ENCODE measurements at regions of chr7 and their contacts with region 1.

Region 1: GRCh38 chr7:156816943-156817572 is 75.9 kb downstream of the LMBR1 start:
- DNase-seq: no peak
- ATAC-seq: peak; percentile 66
- H3K4me3 ChIP-seq: no peak overlapping the region
- H3K27ac ChIP-seq: no peak overlapping the region
- H3K4me1 ChIP-seq: no peaks in the 10 kb centered on the region
- H3K27me3 ChIP-seq: no peaks in the 10 kb centered on the region
- CTCF ChIP-seq: peak; percentile 21 to 62 (median 39); a peak in 3 of 6 replicates
- EP300 ChIP-seq: no peak
- POLR2A ChIP-seq: no peak
- RAD21 ChIP-seq: peak; percentile 94

Region 2: GRCh38 chr7:155796381-155797261 is 1020.4 kb before region 1 on chr7:
- CTCF ChIA-PET with region 1: interaction called, 3 read pairs
- POLR2A ChIA-PET with region 1: no interaction called
- RAD21 ChIA-PET with region 1: no interaction called
- SMC1A ChIA-PET with region 1: no interaction called
- in situ Hi-C with region 1: loop called (anchors 5 kb)
- intact Hi-C with region 1: loop called (anchors 5 kb)
- DNase-seq: no peak
- ATAC-seq: peak; percentile 96
- H3K4me3 ChIP-seq: no peak overlapping the region
- H3K27ac ChIP-seq: no peak overlapping the region
- H3K4me1 ChIP-seq: no peaks in the 10 kb centered on the region
- H3K27me3 ChIP-seq: peaks cover 0 to 3% of the 10 kb centered on the region in 2 experiments; a peak in 3 of 4 replicates
- CTCF ChIP-seq: peak; percentile 60 to 95 (median 88)
- EP300 ChIP-seq: no peak
- POLR2A ChIP-seq: no peak
- RAD21 ChIP-seq: peak; percentile 77

Region 3: DNA sequence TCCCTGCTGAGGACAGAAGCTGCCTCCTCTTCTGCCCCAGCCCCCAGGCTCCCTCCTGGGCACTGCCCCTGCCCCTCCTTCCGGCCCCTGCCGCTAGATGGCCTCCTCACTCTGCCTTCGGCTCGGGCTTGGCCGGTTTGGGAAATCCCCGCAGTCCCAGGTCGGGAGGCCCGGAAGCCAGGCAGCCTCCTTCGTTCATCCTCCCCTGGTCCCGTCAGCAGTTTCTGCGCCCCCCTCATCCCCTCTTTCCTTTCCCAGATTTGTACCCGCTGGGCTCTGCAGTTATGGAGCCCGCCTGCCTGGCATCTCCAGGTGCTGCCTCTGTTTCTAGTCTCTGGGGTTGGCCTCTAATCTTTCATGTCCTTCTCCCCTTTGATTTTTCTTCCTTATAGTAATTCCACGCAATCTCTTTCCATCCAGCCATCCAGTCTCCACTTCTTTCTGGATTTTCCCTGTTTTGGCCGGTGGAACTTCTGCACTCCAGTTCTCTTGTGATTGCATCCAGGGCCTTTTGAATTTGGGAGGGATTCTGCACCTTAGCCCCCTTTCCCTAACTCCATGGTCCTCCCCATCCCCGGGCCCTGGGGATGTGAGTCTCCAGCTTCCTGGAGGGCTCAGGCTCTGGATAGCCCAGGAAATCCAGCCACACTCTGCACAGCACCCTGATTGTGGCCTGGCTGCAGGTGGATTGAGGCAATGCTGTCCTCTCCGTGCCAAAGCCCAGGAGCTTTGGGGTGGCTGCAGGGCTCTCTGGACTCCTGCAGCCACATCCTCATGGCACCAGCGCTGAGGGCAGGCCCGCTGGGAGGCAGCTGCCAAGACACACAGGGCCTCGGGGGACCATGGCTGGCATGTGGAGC is 1001.5 kb before region 1 on chr7:
- CTCF ChIA-PET with region 1: interaction called, 8 read pairs
- POLR2A ChIA-PET with region 1: no interaction called
- RAD21 ChIA-PET with region 1: no interaction called
- SMC1A ChIA-PET with region 1: no interaction called
- in situ Hi-C with region 1: loop called (anchors 5 kb)
- intact Hi-C with region 1: loop called (anchors 2 kb)
- DNase-seq: no peak
- ATAC-seq: peak; percentile 99
- H3K4me3 ChIP-seq: no peak overlapping the region
- H3K27ac ChIP-seq: no peak overlapping the region
- H3K4me1 ChIP-seq: no peaks in the 10 kb centered on the region
- H3K27me3 ChIP-seq: peaks cover 6 to 8% of the 10 kb centered on the region in 2 experiments
- CTCF ChIP-seq: peak; percentile 79 to 97 (median 96); a peak in 5 of 6 replicates
- EP300 ChIP-seq: no peak
- POLR2A ChIP-seq: no peak
- RAD21 ChIP-seq: peak; percentile 97

Region 4: DNA sequence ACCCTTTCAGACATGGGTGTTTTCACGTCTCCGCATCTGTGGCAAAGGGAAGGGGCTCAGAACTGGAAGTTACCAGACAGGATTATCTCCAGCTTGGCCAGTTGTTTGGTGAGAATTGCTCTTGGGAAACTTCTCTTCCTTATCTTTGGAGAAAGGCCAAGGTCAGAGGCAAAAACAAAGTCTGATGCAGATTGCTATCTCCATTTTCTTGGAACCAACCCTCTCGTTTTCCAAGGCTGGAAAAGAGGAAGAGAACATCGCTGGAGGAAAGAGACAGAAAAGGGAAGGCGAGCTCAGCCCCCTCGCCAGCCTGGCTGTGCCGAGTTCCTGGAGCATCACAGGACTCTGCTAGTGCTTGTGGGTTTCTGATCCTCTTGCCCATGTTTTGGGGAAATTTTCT is 608.0 kb before region 1 on chr7:
- CTCF ChIA-PET with region 1: no interaction called
- POLR2A ChIA-PET with region 1: no interaction called
- RAD21 ChIA-PET with region 1: no interaction called
- SMC1A ChIA-PET with region 1: no interaction called
- in situ Hi-C with region 1: no loop called
- intact Hi-C with region 1: loop called (anchors 10 kb)
- DNase-seq: no peak
- ATAC-seq: no peak
- H3K4me3 ChIP-seq: no peak overlapping the region
- H3K27ac ChIP-seq: no peak overlapping the region
- H3K4me1 ChIP-seq: no peaks in the 10 kb centered on the region
- H3K27me3 ChIP-seq: no peaks in the 10 kb centered on the region; a peak in 3 of 4 replicates
- CTCF ChIP-seq: no peak
- EP300 ChIP-seq: no peak
- POLR2A ChIP-seq: no peak
- RAD21 ChIP-seq: no peak

Region 5: GRCh38 chr7:156544919-156545723 is 271.9 kb before region 1 on chr7:
- CTCF ChIA-PET with region 1: no interaction called
- POLR2A ChIA-PET with region 1: no interaction called
- RAD21 ChIA-PET with region 1: interaction called, 4 read pairs
- SMC1A ChIA-PET with region 1: no interaction called
- in situ Hi-C with region 1: no loop called
- intact Hi-C with region 1: loop called (anchors 10 kb)
- DNase-seq: no peak
- ATAC-seq: no peak
- H3K4me3 ChIP-seq: no peak overlapping the region
- H3K27ac ChIP-seq: no peak overlapping the region
- H3K4me1 ChIP-seq: 0 out of 2 replicates have a peak, but pooled peaks cover 3% of the 10 kb centered on the region
- H3K27me3 ChIP-seq: no peaks in the 10 kb centered on the region
- CTCF ChIP-seq: no peak
- EP300 ChIP-seq: no peak
- POLR2A ChIP-seq: no peak
- RAD21 ChIP-seq: no peak

Region 6: DNA sequence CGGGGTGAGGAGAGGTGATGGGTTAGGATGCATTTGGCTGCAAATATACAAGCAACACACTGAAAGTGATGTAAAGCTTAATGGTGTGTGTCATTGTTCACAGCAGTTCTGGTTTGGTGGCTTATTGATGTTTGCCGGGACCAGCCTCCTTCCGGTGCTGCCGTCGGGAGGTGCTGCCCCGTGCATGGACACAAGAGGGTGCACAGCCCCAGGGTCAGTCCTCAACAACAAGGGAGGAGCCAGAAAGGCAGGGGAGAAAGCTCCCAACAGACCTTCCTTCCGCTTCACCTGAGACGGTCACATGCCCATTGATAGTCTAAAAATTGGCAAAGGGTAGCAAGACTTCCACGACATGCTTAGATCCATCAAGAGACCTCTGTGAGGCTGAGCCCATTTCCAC is 167.0 kb before region 1 on chr7:
- CTCF ChIA-PET with region 1: interaction called, 10 read pairs
- POLR2A ChIA-PET with region 1: interaction called, 5 read pairs
- RAD21 ChIA-PET with region 1: interaction called, 7 read pairs
- SMC1A ChIA-PET with region 1: interaction called, 5 read pairs
- in situ Hi-C with region 1: no loop called
- intact Hi-C with region 1: loop called (anchors 1 kb)
- DNase-seq: no peak
- ATAC-seq: peak; percentile 83
- H3K4me3 ChIP-seq: no peak overlapping the region
- H3K27ac ChIP-seq: no peak overlapping the region
- H3K4me1 ChIP-seq: peaks cover 7% of the 10 kb centered on the region
- H3K27me3 ChIP-seq: no peaks in the 10 kb centered on the region
- CTCF ChIP-seq: peak; percentile 29 to 47 (median 40); a peak in 4 of 6 replicates
- EP300 ChIP-seq: no peak
- POLR2A ChIP-seq: no peak; the same call in 1 of the 2 replicates
- RAD21 ChIP-seq: 0 out of 2 replicates have a peak, but pooled peaks have one; percentile 13

Region 7: GRCh38 chr7:156780724-156781455 is 36.2 kb before region 1 on chr7:
- CTCF ChIA-PET with region 1: interaction called, 9 read pairs
- POLR2A ChIA-PET with region 1: no interaction called
- RAD21 ChIA-PET with region 1: interaction called, 11 read pairs
- SMC1A ChIA-PET with region 1: interaction called, 23 read pairs
- in situ Hi-C with region 1: no loop called
- intact Hi-C with region 1: no loop called
- DNase-seq: peak; percentile 86
- ATAC-seq: peak; percentile 96
- H3K4me3 ChIP-seq: 0 out of 2 replicates have a peak overlapping the region, but pooled peaks have one; percentile 16
- H3K27ac ChIP-seq: peak overlapping the region; percentile 85
- H3K4me1 ChIP-seq: peaks cover 33% of the 10 kb centered on the region
- H3K27me3 ChIP-seq: no peaks in the 10 kb centered on the region
- CTCF ChIP-seq: no peak
- EP300 ChIP-seq: peak; percentile 80; a peak in 2 of 4 replicates
- POLR2A ChIP-seq: no peak
- RAD21 ChIP-seq: peak; percentile 34; the same call in 1 of the 2 replicates

Measured in GM12878 (cell line).